Adrenal gland (tissue), 19 donors: ENCODE measurements at regions of chr16 and their contacts with region 1.

Region 1: DNA sequence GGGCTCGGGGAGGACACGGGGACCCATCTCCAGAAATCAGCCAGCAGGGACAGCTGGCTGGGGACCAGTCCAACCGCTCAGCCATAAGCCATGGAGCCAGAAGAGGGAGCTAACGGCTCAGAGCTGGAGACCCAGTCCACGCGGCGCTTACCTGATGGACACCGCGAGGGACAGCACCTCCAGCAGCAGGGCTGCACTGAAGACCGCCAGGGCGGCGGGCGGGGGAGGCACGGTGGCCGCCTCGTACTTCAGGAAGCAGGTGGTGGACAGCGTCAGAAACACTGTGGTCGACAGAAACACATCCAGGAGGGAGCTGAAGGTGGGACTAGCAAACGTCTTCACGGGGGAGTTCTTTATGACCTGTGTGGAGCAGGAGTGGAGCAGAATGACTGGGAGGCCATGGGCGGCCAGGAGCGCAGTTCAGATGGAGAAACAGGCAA is 102.6 kb upstream of the CREBBP start:
- DNase-seq: peak; percentile 70 to 89 (median 79)
- H3K4me3 ChIP-seq: no peak overlapping the region
- H3K27ac ChIP-seq: no peak overlapping the region
- H3K4me1 ChIP-seq: no peaks in the 10 kb centered on the region
- H3K27me3 ChIP-seq: no peaks in the 10 kb centered on the region
- CTCF ChIP-seq: peak; percentile 36 to 83 (median 71)
- POLR2A ChIP-seq: no peak

Region 2: DNA sequence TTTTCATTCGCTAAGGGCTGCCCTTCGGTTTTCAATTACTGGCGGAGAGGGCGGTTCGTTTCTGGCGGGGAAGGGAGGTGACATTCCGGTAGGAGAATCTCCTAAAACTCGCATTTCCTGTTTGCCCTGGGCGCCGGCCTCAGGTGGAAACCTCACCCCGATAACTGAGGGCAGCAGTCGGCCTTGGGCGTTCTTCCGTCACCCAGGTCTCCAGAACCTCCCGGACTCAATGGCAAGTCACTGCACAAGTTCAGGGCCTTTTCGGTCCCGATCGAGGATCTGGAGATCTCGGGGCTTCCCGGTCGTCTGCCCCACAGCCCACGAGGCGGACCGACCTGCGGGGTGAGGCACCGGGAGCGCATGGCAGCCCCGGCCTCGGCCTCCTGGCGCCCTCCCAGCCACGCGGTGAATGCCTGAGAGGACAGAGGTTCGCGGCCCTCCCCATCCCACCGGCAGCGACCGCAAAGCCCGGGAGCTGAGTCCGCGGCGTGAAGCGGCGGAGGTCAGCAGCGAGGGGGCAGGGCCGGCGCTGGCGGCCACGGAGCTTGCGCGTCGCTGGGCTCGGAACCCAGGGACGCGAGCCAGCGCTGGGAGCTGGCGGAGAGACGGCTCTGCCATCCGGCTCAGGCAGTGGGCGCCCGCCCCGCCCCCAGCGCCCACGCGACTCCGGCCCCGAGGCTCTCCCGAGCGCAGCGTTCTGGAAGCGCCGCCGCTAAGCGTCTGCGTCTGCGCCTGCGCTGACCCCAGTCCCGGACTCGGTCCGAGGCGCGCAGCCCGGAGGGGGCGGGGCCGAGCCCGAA is 200.3 kb after region 1 on chr16:
- intact Hi-C with region 1: loop called in 1 of 2 experiments (anchors 10 kb)
- DNase-seq: peak; percentile 91 to 97 (median 94)
- H3K4me3 ChIP-seq: peak overlapping the region; percentile 41 to 86 (median 70)
- H3K27ac ChIP-seq: peak overlapping the region; percentile 95 to 98 (median 97)
- H3K4me1 ChIP-seq: peaks cover 5 to 7% of the 10 kb centered on the region in 2 donors
- H3K27me3 ChIP-seq: no peaks in the 10 kb centered on the region
- CTCF ChIP-seq: peak in 3 of 6 experiments; percentile 10 to 25 (median 14)
- POLR2A ChIP-seq: peak; percentile 40 to 82

Region 3: GRCh38 chr16:4261557-4262172 is 278.6 kb after region 1 on chr16:
- intact Hi-C with region 1: loop called in 1 of 2 experiments (anchors 5 kb)
- DNase-seq: peak in 3 of 7 donors; percentile 49 to 56 (median 56)
- H3K4me3 ChIP-seq: no peak overlapping the region
- H3K27ac ChIP-seq: no peak overlapping the region
- H3K4me1 ChIP-seq: peaks cover 0 to 16% of the 10 kb centered on the region in 2 donors
- H3K27me3 ChIP-seq: no peaks in the 10 kb centered on the region
- CTCF ChIP-seq: peak; percentile 50 to 83 (median 66)
- POLR2A ChIP-seq: no peak